Gastrocnemius medialis (tissue), 4 donors: ENCODE measurements at regions of chr15 and their contacts with region 1.

Region 1: GRCh38 chr15:99704444-99704838 is 28.8 kb downstream of the LYSMD4 start:
- DNase-seq: peak in 1 of 2 donors; percentile 44
- ATAC-seq: peak; percentile 59 to 71
- H3K4me3 ChIP-seq: no peak overlapping the region
- H3K27ac ChIP-seq: peak overlapping the region; percentile 82 to 90 (median 84)
- H3K4me1 ChIP-seq: peaks cover 41 to 53% of the 10 kb centered on the region in 2 donors
- H3K27me3 ChIP-seq: no peaks in the 10 kb centered on the region
- CTCF ChIP-seq: peak; percentile 75 to 83 (median 79)
- POLR2A ChIP-seq: no peak

Region 2: GRCh38 chr15:99275525-99276128 is 428.8 kb before region 1 on chr15:
- in situ Hi-C with region 1: loop called in 3 of 4 experiments (anchors 5 to 25 kb)
- intact Hi-C with region 1: no loop called
- DNase-seq: no peak
- ATAC-seq: peak in 1 of 2 donors; percentile 35
- H3K4me3 ChIP-seq: no peak overlapping the region
- H3K27ac ChIP-seq: no peak overlapping the region
- H3K4me1 ChIP-seq: no peaks in the 10 kb centered on the region
- H3K27me3 ChIP-seq: no peaks in the 10 kb centered on the region
- CTCF ChIP-seq: no peak
- POLR2A ChIP-seq: no peak

Region 3: GRCh38 chr15:99371180-99372103 is 333.0 kb before region 1 on chr15:
- in situ Hi-C with region 1: no loop called
- intact Hi-C with region 1: no loop called
- DNase-seq: no peak
- ATAC-seq: no peak
- H3K4me3 ChIP-seq: no peak overlapping the region
- H3K27ac ChIP-seq: no peak overlapping the region
- H3K4me1 ChIP-seq: no peaks in the 10 kb centered on the region
- H3K27me3 ChIP-seq: no peaks in the 10 kb centered on the region
- CTCF ChIP-seq: no peak
- POLR2A ChIP-seq: no peak

Region 4: DNA sequence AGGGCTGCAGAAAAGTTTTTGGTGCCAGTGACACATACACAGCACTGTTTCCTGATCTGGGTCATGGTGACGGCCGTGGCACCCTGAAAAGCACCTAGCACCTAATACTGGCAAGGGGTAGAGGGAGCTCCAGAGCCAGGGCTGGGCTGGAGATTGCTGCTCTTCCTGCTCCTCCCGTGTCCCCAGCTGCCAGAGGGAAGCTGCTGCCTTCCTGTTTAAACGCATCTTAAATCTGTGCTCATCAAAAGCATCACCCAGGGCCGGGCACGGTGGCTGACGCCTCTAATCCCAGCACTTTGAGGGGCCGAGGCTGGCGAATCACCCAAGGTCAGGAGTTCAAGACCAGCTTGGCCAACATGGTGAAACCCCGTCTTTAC is 295.4 kb before region 1 on chr15:
- in situ Hi-C with region 1: loop called in 3 of 4 experiments (anchors 5 to 25 kb)
- intact Hi-C with region 1: loop called (anchors 1 kb)
- DNase-seq: peak; percentile 54 to 67
- ATAC-seq: peak; percentile 74 to 91
- H3K4me3 ChIP-seq: no peak overlapping the region
- H3K27ac ChIP-seq: peak overlapping the region in 3 of 4 donors; percentile 4 to 37 (median 32)
- H3K4me1 ChIP-seq: peaks cover 13 to 15% of the 10 kb centered on the region in 2 donors
- H3K27me3 ChIP-seq: no peaks in the 10 kb centered on the region
- CTCF ChIP-seq: peak; percentile 36 to 76 (median 60)
- POLR2A ChIP-seq: no peak

Region 5: DNA sequence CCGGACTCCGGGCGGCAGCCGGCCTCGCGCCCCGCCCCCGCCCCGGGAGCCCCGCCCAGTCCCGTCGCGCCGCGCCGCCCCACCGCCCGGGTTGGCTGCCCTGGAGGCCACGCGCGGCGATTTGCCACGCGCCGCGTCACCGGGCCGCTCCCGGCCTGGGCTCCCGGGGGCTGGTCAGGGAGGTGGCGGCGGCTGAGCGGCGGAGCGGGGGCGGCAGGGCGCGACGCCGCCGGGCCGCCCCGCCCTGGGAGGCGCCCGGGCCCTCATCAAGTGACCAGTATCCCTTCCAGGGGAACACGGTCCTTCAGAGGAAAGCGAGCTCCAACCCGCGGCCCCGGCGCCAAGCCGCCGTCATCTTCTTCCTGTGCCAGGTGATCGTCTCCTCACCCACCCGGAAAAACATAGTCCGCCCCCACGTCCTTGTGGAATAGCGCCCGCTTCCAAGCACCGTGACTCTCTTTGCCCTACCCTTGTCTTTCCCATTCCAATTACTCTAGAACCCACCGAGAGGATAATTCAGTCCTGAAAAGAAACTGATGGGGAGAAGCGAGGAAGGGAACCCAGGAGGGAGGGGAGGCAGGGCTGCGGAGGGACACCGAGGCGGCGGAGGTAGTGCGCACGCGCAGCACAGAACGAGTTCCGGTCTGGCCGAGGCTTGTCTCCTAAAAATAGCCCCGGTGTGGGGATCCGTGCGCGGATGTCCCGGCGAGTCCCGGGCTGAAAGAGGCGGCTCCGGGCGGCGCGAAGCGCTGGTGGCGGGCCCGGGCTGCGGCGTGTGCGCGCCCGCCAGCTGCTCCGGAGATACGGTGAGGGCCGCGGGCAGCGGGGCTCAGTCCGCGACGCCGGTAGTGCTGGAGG is 138.9 kb before region 1 on chr15 and contains the start of gene MEF2A:
- in situ Hi-C with region 1: loop called in 1 of 4 experiments (anchors 5 kb)
- intact Hi-C with region 1: loop called (anchors 1 kb)
- DNase-seq: peak; percentile 93 to 94
- ATAC-seq: peak; percentile 78 to 83
- H3K4me3 ChIP-seq: peak within 1 kb of the TSS; percentile 78 to 86 (median 80)
- H3K27ac ChIP-seq: peak within 1 kb of the TSS; percentile 98 to 100 (median 98)
- H3K4me1 ChIP-seq: peaks cover 30 to 32% of the 10 kb centered on the region in 2 donors
- H3K27me3 ChIP-seq: no peaks in the 10 kb centered on the region
- CTCF ChIP-seq: peak in 1 of 5 experiments; percentile 28
- POLR2A ChIP-seq: peak; percentile 93
- total RNA-seq, gene MEF2A: 66.9 to 128 (median 107) TPM

Region 6: DNA sequence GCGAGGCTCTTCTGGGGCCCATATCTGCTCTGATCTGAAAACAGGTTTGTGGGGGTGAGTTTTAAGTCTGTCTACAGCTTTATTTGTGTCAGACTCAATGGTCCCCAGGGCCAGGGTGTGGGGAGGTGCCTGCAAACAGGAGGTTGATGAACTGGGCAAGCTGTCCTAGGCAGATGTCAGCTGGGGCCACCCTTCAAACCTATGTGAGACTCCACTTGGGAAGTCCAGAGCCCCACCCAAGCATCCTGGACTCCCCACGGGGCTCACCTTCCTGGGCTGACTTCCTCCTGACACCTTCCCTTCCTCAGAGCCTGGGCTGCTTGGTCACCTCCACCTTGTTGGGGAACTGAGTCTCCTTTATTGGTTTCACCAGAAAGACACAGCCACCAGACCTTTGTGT is 37.4 kb after region 1 on chr15:
- in situ Hi-C with region 1: no loop called
- intact Hi-C with region 1: no loop called
- DNase-seq: no peak
- ATAC-seq: no peak
- H3K4me3 ChIP-seq: no peak overlapping the region
- H3K27ac ChIP-seq: no peak overlapping the region
- H3K4me1 ChIP-seq: no peaks in the 10 kb centered on the region
- H3K27me3 ChIP-seq: no peaks in the 10 kb centered on the region
- CTCF ChIP-seq: no peak
- POLR2A ChIP-seq: no peak

Region 7: GRCh38 chr15:99755692-99756409 is 51.4 kb after region 1 on chr15:
- in situ Hi-C with region 1: no loop called
- intact Hi-C with region 1: loop called (anchors 2 kb)
- DNase-seq: no peak
- ATAC-seq: peak; percentile 91 to 98
- H3K4me3 ChIP-seq: no peak overlapping the region
- H3K27ac ChIP-seq: no peak overlapping the region
- H3K4me1 ChIP-seq: no peaks in the 10 kb centered on the region
- H3K27me3 ChIP-seq: no peaks in the 10 kb centered on the region
- CTCF ChIP-seq: peak; percentile 59 to 89 (median 77)
- POLR2A ChIP-seq: no peak

Region 8: GRCh38 chr15:99818872-99819271 is 114.4 kb after region 1 on chr15:
- in situ Hi-C with region 1: no loop called
- intact Hi-C with region 1: no loop called
- DNase-seq: no peak
- ATAC-seq: no peak
- H3K4me3 ChIP-seq: no peak overlapping the region
- H3K27ac ChIP-seq: no peak overlapping the region
- H3K4me1 ChIP-seq: no peaks in the 10 kb centered on the region
- H3K27me3 ChIP-seq: no peaks in the 10 kb centered on the region
- CTCF ChIP-seq: no peak
- POLR2A ChIP-seq: no peak

Region 9: GRCh38 chr15:99963096-99963825 is 258.8 kb after region 1 on chr15:
- in situ Hi-C with region 1: no loop called
- intact Hi-C with region 1: no loop called
- DNase-seq: no peak
- ATAC-seq: no peak
- H3K4me3 ChIP-seq: no peak overlapping the region
- H3K27ac ChIP-seq: no peak overlapping the region
- H3K4me1 ChIP-seq: no peaks in the 10 kb centered on the region
- H3K27me3 ChIP-seq: no peaks in the 10 kb centered on the region
- CTCF ChIP-seq: no peak
- POLR2A ChIP-seq: no peak